A549 (cell line): ENCODE measurements at regions of chr9 and their contacts with region 1.

Region 1: DNA sequence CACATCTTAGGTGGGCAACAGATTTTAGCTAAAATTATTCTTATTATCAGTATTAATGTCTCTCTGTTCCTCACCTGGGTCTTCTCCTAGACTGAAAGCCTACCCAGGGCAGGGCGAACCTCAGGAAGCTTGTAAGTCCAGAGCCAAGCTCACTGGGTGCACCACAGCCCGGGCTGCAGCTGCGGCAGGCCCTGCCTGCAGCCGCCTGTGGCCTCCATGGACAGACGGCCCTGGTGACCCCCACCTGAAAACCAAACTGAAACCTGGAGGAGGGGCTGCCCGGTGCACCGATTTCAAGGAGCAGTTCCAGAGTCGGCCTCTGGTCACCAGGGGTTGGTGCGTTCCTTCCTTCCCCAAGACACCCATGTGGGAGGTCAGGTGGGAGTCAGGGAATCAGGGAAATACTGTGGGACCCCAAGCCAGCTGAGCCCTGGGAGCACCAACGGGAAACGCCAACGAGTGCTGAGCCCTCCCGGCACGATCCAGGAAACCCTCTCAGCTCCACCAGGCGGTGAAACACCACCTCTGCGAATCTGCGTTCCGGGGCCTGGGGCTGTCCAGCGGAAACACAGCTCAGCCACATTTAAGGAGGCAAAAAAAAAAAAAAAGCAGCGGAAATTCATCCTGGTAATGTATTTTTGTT is 68.6 kb upstream of the PPP1R26 start:
- DNase-seq: no peak
- ATAC-seq: no peak
- H3K4me3 ChIP-seq: no peak overlapping the region
- H3K27ac ChIP-seq: no peak overlapping the region
- H3K4me1 ChIP-seq: no peaks in the 10 kb centered on the region
- CTCF ChIP-seq: no peak
- EP300 ChIP-seq: no peak
- POLR2A ChIP-seq: no peak
- RAD21 ChIP-seq: no peak

Region 2: GRCh38 chr9:135070198-135070951 is 340.6 kb before region 1 on chr9:
- CTCF ChIA-PET with region 1: interaction called, 414 read pairs
- POLR2A ChIA-PET with region 1: no interaction called
- DNase-seq: no peak
- ATAC-seq: peak in 1 of 2 experiments; percentile 15; a peak in 2 of 6 replicates
- H3K4me3 ChIP-seq: no peak overlapping the region
- H3K27ac ChIP-seq: no peak overlapping the region
- H3K4me1 ChIP-seq: no peaks in the 10 kb centered on the region
- CTCF ChIP-seq: no peak
- EP300 ChIP-seq: no peak
- POLR2A ChIP-seq: no peak
- RAD21 ChIP-seq: no peak

Region 3: DNA sequence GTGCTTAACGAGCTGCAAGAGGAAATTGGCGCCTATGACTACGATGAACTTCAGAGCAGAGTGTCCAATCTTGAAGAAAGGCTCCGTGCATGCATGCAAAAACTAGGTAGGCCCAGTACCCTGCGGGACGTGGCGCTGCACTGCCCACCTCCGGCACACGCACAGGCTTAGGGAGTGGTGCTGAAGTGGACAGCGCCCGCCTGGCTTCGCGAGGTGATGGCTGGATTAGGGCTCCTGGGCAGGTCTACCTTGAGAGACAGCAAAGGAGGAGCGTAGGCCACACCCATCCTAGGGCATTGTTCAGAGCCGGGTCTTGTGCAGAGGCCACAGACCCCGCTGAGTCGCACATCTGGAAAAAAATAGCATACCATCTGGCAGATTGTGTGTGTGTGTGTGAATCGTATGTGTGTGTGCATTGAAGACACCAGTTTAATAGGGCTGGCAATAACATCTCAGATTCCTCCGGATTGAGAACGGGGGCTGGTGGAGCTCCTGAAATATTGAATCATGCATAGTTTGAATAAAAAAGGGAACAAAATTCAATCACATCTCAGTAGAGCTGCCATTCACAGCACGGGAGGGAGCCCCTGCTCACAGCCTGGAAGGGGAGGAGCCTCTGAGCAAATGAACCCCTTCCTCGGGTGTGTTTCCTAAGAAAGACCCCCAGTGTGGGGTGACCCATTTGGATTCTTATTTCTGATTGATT is 312.4 kb before region 1 on chr9:
- CTCF ChIA-PET with region 1: interaction called, 22 read pairs
- POLR2A ChIA-PET with region 1: no interaction called
- DNase-seq: no peak
- ATAC-seq: 0 out of 6 replicates have a peak, but pooled peaks of 1 of the 2 experiments have one; percentile 35
- H3K4me3 ChIP-seq: no peak overlapping the region
- H3K27ac ChIP-seq: no peak overlapping the region
- H3K4me1 ChIP-seq: no peaks in the 10 kb centered on the region
- CTCF ChIP-seq: no peak
- EP300 ChIP-seq: no peak
- POLR2A ChIP-seq: no peak
- RAD21 ChIP-seq: no peak

Region 4: DNA sequence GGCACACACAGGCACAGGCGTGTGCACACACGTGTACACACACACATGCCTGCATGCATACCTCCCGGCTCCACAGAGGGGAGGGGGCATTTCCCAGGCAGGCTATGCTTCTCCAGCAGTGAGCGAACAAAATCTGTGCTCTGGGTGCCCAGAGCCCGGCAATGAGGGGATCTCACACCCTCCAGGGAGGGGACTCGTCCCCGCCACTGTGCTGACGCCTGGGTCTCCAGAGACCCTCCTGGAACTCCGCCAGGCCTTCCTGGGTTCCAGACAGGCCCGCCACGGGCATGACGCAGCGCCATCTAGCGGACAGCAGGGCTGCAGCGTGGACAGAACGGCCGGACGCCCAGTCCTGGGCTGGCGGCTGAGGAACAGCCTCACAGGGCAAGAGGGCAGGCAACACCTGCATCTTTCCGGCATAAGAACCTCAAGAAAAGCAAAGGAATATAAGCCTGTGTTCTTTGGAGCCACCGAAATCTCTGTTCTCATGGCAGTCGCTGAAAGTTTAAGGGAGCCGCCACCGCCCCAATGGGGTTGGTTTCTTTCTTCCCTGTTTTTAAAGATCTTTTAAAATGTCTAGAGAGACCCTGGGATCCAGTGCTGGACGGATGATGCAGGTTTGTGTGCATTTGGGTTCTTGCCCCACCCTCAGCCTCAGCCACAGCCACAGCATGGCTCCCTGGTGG is 67.0 kb before region 1 on chr9:
- CTCF ChIA-PET with region 1: interaction called, 47 read pairs
- POLR2A ChIA-PET with region 1: no interaction called
- DNase-seq: peak; percentile 34 to 73
- ATAC-seq: peak; percentile 65 to 89; a peak in 4 of 6 replicates
- H3K4me3 ChIP-seq: no peak overlapping the region
- H3K27ac ChIP-seq: no peak overlapping the region
- H3K4me1 ChIP-seq: no peaks in the 10 kb centered on the region
- CTCF ChIP-seq: peak; percentile 84
- EP300 ChIP-seq: no peak
- POLR2A ChIP-seq: no peak
- RAD21 ChIP-seq: peak; percentile 82

Region 5: GRCh38 chr9:135370411-135371375 is 40.3 kb before region 1 on chr9:
- CTCF ChIA-PET with region 1: interaction called, 12 read pairs
- POLR2A ChIA-PET with region 1: no interaction called
- DNase-seq: no peak
- ATAC-seq: no peak
- H3K4me3 ChIP-seq: no peak overlapping the region
- H3K27ac ChIP-seq: peak overlapping the region in 1 of 2 experiments; percentile 59; a peak in 2 of 6 replicates
- H3K4me1 ChIP-seq: no peaks in the 10 kb centered on the region; the same call in 2 of the 3 replicates
- CTCF ChIP-seq: no peak
- EP300 ChIP-seq: no peak
- POLR2A ChIP-seq: no peak
- RAD21 ChIP-seq: no peak

Region 6: DNA sequence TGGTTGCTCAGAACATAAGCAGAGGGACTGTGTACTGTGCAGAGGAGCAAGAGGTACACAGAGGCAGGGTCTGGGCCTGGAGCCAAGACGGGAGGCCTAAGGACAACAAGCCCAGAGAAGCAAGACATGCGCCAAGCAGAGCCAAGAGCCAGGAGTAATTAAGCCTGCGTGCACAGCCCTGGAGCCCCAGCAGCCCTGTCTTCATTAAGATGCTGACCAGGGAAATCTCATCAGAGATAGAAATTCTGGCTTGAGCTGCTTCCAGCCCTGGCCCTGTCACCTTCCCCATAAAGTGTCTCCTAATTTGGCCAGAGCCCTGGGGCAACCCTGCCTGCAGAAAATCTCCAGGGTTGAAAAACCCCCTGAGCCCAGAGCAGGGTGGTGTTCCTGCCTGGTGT is 15.6 kb before region 1 on chr9:
- CTCF ChIA-PET with region 1: interaction called, 56 read pairs
- POLR2A ChIA-PET with region 1: no interaction called
- DNase-seq: no peak
- ATAC-seq: no peak
- H3K4me3 ChIP-seq: no peak overlapping the region
- H3K27ac ChIP-seq: no peak overlapping the region
- H3K4me1 ChIP-seq: no peaks in the 10 kb centered on the region
- CTCF ChIP-seq: no peak
- EP300 ChIP-seq: no peak
- POLR2A ChIP-seq: no peak
- RAD21 ChIP-seq: no peak

Region 7: GRCh38 chr9:135440620-135441019 is 29.7 kb after region 1 on chr9:
- CTCF ChIA-PET with region 1: interaction called, 28 read pairs
- POLR2A ChIA-PET with region 1: no interaction called
- DNase-seq: peak; percentile 41 to 87
- ATAC-seq: peak; percentile 60 to 70; a peak in 5 of 6 replicates
- H3K4me3 ChIP-seq: no peak overlapping the region
- H3K27ac ChIP-seq: no peak overlapping the region
- H3K4me1 ChIP-seq: no peaks in the 10 kb centered on the region
- CTCF ChIP-seq: peak; percentile 69
- EP300 ChIP-seq: no peak
- POLR2A ChIP-seq: no peak
- RAD21 ChIP-seq: peak; percentile 44 to 60; a peak in 4 of 5 replicates

Region 8: GRCh38 chr9:135622415-135623020 is 211.6 kb after region 1 on chr9:
- CTCF ChIA-PET with region 1: no interaction called
- POLR2A ChIA-PET with region 1: no interaction called
- DNase-seq: no peak
- ATAC-seq: no peak
- H3K4me3 ChIP-seq: no peak overlapping the region
- H3K27ac ChIP-seq: no peak overlapping the region
- H3K4me1 ChIP-seq: no peaks in the 10 kb centered on the region
- CTCF ChIP-seq: no peak
- EP300 ChIP-seq: no peak
- POLR2A ChIP-seq: no peak
- RAD21 ChIP-seq: no peak

Region 9: DNA sequence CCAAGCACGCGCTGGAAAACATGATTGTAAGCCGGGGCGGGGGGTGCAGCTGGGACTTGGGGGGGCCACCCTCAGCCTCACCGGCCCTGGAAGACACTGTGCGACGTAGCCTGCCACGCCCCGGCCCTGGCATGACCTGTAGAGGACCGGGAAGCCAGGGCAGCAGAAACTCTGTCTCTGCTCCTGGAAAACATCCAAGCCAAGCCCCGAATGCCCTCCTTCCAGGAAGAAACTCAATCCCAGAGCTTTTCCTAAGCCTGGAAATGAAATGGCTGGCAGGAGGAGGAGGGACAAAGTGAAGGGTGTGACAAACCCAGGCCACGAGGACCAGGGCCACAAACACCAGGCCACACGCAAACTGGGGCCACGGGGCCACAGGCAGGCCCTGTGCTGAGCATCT is 346.4 kb after region 1 on chr9:
- CTCF ChIA-PET with region 1: no interaction called
- POLR2A ChIA-PET with region 1: no interaction called
- DNase-seq: no peak
- ATAC-seq: no peak
- H3K4me3 ChIP-seq: no peak overlapping the region
- H3K27ac ChIP-seq: no peak overlapping the region
- H3K4me1 ChIP-seq: no peaks in the 10 kb centered on the region
- CTCF ChIP-seq: no peak
- EP300 ChIP-seq: no peak
- POLR2A ChIP-seq: no peak
- RAD21 ChIP-seq: no peak